ENCODE measurements at regions of chr22 and their contacts with region 1.

Region 1: DNA sequence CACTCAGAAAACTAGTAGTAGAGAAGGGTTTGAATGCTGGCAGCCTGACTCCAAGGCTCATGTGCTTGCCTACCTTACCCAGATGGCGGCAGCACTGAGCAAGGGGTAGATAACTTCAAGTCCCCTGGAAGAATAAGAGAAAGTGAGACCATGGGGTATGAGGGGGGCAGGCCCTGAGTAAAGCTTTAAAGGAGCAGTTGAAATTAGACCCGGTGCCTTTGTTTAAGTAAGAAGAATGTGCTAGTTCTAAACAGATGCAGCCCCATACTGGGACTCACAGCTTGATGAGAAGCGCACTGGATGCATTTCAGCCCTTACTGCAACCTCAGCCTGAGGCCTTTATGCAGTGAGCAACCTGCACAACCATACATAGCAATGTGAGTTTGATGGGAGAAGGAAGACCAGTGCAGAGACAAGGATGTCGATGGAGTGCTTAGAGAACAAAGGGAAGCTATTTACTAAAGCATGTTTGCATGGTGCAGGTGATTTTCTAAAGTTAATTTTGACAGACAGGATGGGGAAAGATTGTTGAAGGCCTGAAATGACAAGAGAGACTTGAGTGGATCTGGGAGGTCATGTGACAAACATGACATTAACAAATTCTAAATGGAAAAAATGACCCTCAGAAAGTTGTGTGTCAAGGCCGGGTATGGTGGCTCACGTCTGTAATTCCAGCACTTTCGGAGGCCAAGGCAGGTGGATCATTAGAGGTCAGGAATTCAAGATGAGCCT is 27.1 kb upstream of the TMA7B start:
- DNase-seq: peak; percentile 23
- H3K4me3 ChIP-seq: no peak overlapping the region
- H3K27ac ChIP-seq: no peak overlapping the region
- H3K4me1 ChIP-seq: no peaks in the 10 kb centered on the region
- H3K27me3 ChIP-seq: peaks cover 38 to 47% of the 10 kb centered on the region in 2 experiments
- CTCF ChIP-seq: peak; percentile 49 to 54
- POLR2A ChIP-seq: no peak

Region 2: DNA sequence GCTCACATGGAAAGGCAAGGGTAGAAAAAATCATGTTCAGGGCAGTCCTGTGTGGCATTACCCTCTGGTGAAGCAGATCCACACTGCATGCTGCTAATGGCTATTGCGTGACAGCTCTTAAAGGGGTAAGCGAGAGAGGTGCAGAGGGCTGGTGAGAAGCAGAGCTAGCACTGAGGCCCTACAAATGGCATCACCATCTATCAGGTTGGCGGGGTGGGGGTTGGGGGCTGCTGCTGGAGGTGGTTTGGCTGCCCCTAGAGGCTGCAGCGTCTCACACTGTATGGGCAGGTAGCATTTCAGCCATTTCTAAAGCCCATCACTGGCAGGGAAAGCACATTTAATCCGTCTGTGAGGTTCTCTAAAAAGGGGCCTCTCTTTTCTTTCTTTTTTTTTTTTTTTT is 10.3 kb after region 1 on chr22:
- CTCF ChIA-PET with region 1: interaction called, 14 read pairs
- POLR2A ChIA-PET with region 1: no interaction called
- dilution Hi-C with region 1: no loop called
- intact Hi-C with region 1: no loop called
- DNase-seq: no peak
- H3K4me3 ChIP-seq: no peak overlapping the region
- H3K27ac ChIP-seq: no peak overlapping the region
- H3K4me1 ChIP-seq: no peaks in the 10 kb centered on the region
- H3K27me3 ChIP-seq: peaks cover 4 to 5% of the 10 kb centered on the region in 2 experiments
- CTCF ChIP-seq: peak in 1 of 2 donors; percentile 3
- POLR2A ChIP-seq: no peak

Region 3: DNA sequence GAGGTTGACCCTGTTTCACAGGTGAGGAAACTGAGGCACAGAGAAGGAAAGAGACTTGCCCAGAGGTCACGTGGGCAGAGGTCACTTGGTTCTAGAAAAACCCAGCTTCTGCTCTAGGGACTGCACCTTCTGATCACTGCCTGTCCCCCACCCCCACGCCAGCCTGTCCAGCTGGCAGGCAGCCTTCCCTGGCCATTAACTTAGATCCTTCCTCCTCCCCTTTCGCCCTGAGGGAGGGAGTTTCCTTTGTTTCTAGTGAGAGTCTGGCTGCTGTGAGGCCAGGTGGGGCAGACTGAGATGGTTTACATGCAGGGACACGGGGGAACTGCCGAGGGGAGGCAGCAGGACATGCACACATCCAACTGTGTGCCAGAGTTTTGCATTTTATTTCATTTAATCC is 64.9 kb after region 1 on chr22:
- CTCF ChIA-PET with region 1: interaction called, 16 read pairs
- POLR2A ChIA-PET with region 1: no interaction called
- dilution Hi-C with region 1: no loop called
- intact Hi-C with region 1: no loop called
- DNase-seq: peak; percentile 48
- H3K4me3 ChIP-seq: no peak overlapping the region
- H3K27ac ChIP-seq: no peak overlapping the region
- H3K4me1 ChIP-seq: no peaks in the 10 kb centered on the region
- H3K27me3 ChIP-seq: peaks cover 22 to 26% of the 10 kb centered on the region in 2 experiments
- CTCF ChIP-seq: no peak
- POLR2A ChIP-seq: no peak